IMR-90 (cell line): ENCODE measurements at regions of chr5 and their contacts with region 1.

Region 1: GRCh38 chr5:52799983-52800393 is 12.3 kb downstream of the ITGA1 start:
- DNase-seq: peak; percentile 94
- ATAC-seq: peak; percentile 78
- H3K4me3 ChIP-seq: peak overlapping the region; percentile 56
- H3K27ac ChIP-seq: peak overlapping the region; percentile 95
- H3K4me1 ChIP-seq: peaks cover under 1% of the 10 kb centered on the region; the same call in 1 of the 2 replicates
- H3K27me3 ChIP-seq: no peaks in the 10 kb centered on the region
- CTCF ChIP-seq: no peak
- POLR2A ChIP-seq: peak; percentile 71
- RAD21 ChIP-seq: no peak

Region 2: GRCh38 chr5:52837068-52837467 is 37.1 kb after region 1 on chr5:
- CTCF ChIA-PET with region 1: interaction called, 4 read pairs
- POLR2A ChIA-PET with region 1: interaction called, 4 read pairs
- dilution Hi-C with region 1: no loop called
- in situ Hi-C with region 1: loop called (anchors 5 kb)
- intact Hi-C with region 1: loop called (anchors 1 kb)
- DNase-seq: peak; percentile 73
- ATAC-seq: peak; percentile 60
- H3K4me3 ChIP-seq: peak overlapping the region; percentile 4; the same call in 1 of the 2 replicates
- H3K27ac ChIP-seq: peak overlapping the region; percentile 94
- H3K4me1 ChIP-seq: peaks cover 16% of the 10 kb centered on the region
- H3K27me3 ChIP-seq: no peaks in the 10 kb centered on the region
- CTCF ChIP-seq: peak; percentile 34; the same call in 1 of the 2 replicates
- POLR2A ChIP-seq: peak; percentile 53
- RAD21 ChIP-seq: peak; percentile 45; the same call in 1 of the 2 replicates

Region 3: GRCh38 chr5:52864371-52864770 is 64.4 kb after region 1 on chr5:
- CTCF ChIA-PET with region 1: no interaction called
- POLR2A ChIA-PET with region 1: interaction called, 13 read pairs
- dilution Hi-C with region 1: no loop called
- in situ Hi-C with region 1: no loop called
- intact Hi-C with region 1: loop called (anchors 2 kb)
- DNase-seq: peak; percentile 76
- ATAC-seq: peak; percentile 40
- H3K4me3 ChIP-seq: no peak overlapping the region
- H3K27ac ChIP-seq: peak overlapping the region; percentile 100
- H3K4me1 ChIP-seq: peaks cover 7% of the 10 kb centered on the region; the same call in 1 of the 2 replicates
- H3K27me3 ChIP-seq: no peaks in the 10 kb centered on the region
- CTCF ChIP-seq: no peak
- POLR2A ChIP-seq: no peak
- RAD21 ChIP-seq: no peak

Region 4: GRCh38 chr5:52915176-52915875 is 115.3 kb after region 1 on chr5:
- CTCF ChIA-PET with region 1: interaction called, 5 read pairs
- POLR2A ChIA-PET with region 1: no interaction called
- dilution Hi-C with region 1: no loop called
- in situ Hi-C with region 1: no loop called
- intact Hi-C with region 1: loop called (anchors 1 kb)
- DNase-seq: peak; percentile 75
- ATAC-seq: peak; percentile 96
- H3K4me3 ChIP-seq: peak overlapping the region; percentile 10; the same call in 1 of the 2 replicates
- H3K27ac ChIP-seq: no peak overlapping the region
- H3K4me1 ChIP-seq: no peaks in the 10 kb centered on the region; the same call in 1 of the 2 replicates
- H3K27me3 ChIP-seq: no peaks in the 10 kb centered on the region
- CTCF ChIP-seq: peak; percentile 63
- POLR2A ChIP-seq: no peak
- RAD21 ChIP-seq: peak; percentile 70